Testis (tissue), 5 donors: ENCODE measurements at regions of chr20 and their contacts with region 1.

Region 1: GRCh38 chr20:40314278-40314677 is 374.8 kb downstream of the MAFB start:
- DNase-seq: no peak
- H3K4me3 ChIP-seq: no peak overlapping the region
- H3K27ac ChIP-seq: peak overlapping the region in 1 of 2 donors; percentile 2
- H3K4me1 ChIP-seq: no peaks in the 10 kb centered on the region
- H3K27me3 ChIP-seq: no peaks in the 10 kb centered on the region
- CTCF ChIP-seq: no peak
- POLR2A ChIP-seq: no peak

Region 2: DNA sequence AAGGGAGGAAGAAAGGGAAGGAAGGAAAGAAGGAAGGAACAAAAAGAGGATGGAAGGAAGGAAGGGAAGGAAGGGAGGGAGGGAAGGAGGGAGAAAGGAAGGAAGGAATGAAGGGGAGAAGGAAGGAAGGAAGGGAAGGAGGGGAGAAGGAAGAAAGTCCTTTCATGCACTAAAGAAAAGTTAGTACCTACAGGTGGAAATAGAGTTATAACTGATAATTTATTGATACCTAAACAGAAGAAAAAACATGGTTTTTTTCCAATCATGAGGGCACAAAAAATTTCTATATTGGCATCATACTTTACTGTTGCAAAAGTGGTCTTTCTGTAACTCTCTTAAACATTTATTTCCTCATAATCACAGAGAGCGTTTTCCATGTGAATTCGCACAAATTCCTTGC is 284.7 kb before region 1 on chr20:
- intact Hi-C with region 1: no loop called
- DNase-seq: no peak
- H3K4me3 ChIP-seq: no peak overlapping the region
- H3K27ac ChIP-seq: no peak overlapping the region
- H3K4me1 ChIP-seq: no peaks in the 10 kb centered on the region
- H3K27me3 ChIP-seq: no peaks in the 10 kb centered on the region
- CTCF ChIP-seq: no peak
- POLR2A ChIP-seq: no peak

Region 3: GRCh38 chr20:40251284-40251932 is 62.9 kb before region 1 on chr20:
- intact Hi-C with region 1: loop called (anchors 10 kb)
- DNase-seq: peak; percentile 71
- H3K4me3 ChIP-seq: no peak overlapping the region
- H3K27ac ChIP-seq: no peak overlapping the region
- H3K4me1 ChIP-seq: no peaks in the 10 kb centered on the region
- H3K27me3 ChIP-seq: no peaks in the 10 kb centered on the region
- CTCF ChIP-seq: peak in 2 of 3 experiments; percentile 21 to 30
- POLR2A ChIP-seq: no peak